Prostate gland (tissue), 2 donors: ENCODE measurements at regions of chr10 and their contacts with region 1.

Region 1: DNA sequence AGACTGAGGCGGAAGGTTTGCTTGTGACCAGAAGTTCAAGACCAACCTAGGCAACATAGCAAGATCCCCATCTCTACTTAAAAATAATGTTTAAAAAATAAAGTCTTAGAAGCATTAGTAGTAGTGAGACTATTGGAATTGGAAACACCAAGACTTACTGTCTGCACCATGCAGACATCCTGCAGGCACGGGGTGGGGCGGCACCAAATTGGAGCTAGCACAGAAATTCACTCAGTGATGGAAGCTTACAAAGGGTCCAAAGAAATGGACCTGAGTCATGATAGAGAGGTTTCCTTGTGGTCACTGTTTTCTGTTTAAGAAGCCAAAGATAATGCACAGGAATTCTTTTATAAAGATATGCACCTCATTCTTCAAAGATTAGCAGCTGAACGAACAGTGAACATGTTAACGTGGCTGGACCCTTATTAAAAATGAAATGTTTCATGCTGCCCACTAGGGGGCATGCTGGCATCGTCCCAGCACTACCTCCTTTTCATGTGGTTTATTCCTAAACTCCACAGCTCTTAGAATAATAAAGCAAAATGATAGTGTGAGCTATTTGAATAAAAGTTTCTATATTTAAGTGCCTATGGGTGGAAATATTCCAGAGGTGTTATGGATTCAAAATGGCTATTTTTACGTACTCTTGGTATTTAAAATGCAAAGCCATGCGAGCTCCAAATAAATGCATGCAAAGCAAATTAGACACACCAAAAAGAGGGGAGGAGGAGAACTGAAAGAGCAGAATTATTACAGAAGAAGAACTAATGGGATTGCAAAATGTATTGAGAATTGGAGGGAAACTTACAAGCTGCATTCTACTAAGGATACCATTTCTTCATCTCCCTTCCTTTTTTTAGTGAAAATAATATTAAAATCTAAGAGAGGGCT is 28.6 kb downstream of the PDSS1 start:
- DNase-seq: no peak
- H3K4me3 ChIP-seq: no peak overlapping the region
- H3K27ac ChIP-seq: no peak overlapping the region
- H3K4me1 ChIP-seq: no peaks in the 10 kb centered on the region
- H3K27me3 ChIP-seq: no peaks in the 10 kb centered on the region
- CTCF ChIP-seq: peak; percentile 58 to 93 (median 81)
- POLR2A ChIP-seq: no peak

Region 2: GRCh38 chr10:26881600-26882331 is 155.7 kb after region 1 on chr10:
- intact Hi-C with region 1: loop called (anchors 2 kb)
- DNase-seq: no peak
- H3K4me3 ChIP-seq: no peak overlapping the region
- H3K27ac ChIP-seq: no peak overlapping the region
- H3K4me1 ChIP-seq: no peaks in the 10 kb centered on the region
- H3K27me3 ChIP-seq: no peaks in the 10 kb centered on the region
- CTCF ChIP-seq: peak in 3 of 4 experiments; percentile 53 to 83 (median 82)
- POLR2A ChIP-seq: no peak